ENCODE measurements at regions of chr3 and their contacts with region 1.

Region 1: GRCh38 chr3:124014366-124014942 is 22.5 kb upstream of the ROPN1 start:
- DNase-seq: no peak
- H3K4me3 Mint-ChIP-seq: no peak overlapping the region
- H3K27ac Mint-ChIP-seq: no peak overlapping the region
- H3K4me1 Mint-ChIP-seq: no peaks in the 10 kb centered on the region
- H3K27me3 Mint-ChIP-seq: peaks cover 22% of the 10 kb centered on the region

Region 2: DNA sequence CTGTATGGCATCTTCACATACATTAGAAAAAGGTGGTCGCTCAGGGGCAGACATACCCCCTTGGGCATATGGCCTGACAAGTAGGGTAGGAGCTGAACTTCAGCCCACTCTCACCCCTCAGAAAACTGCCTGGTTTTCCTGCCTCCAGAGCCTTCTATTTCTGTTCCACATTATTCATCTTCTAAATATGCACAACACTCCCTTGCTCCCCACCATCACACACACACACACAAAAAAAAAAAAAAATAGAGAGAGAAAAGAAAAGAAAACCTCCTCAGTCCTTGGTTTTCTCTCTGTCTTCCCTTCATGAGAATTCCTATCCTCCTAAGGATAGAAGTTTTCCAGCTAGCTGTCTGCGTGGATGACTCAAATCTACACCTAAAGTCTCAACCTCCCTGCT is 16.9 kb before region 1 on chr3:
- CTCF ChIA-PET with region 1: no interaction called
- POLR2A ChIA-PET with region 1: no interaction called
- intact Hi-C with region 1: no loop called
- DNase-seq: no peak
- H3K4me3 Mint-ChIP-seq: no peak overlapping the region
- H3K27ac Mint-ChIP-seq: no peak overlapping the region
- H3K4me1 Mint-ChIP-seq: no peaks in the 10 kb centered on the region
- H3K27me3 Mint-ChIP-seq: peaks cover 35% of the 10 kb centered on the region

Region 3: GRCh38 chr3:124078953-124079911 is 64.8 kb after region 1 on chr3:
- CTCF ChIA-PET with region 1: interaction called, 22 read pairs
- POLR2A ChIA-PET with region 1: no interaction called
- intact Hi-C with region 1: loop called (anchors 1 kb)
- DNase-seq: no peak
- H3K4me3 Mint-ChIP-seq: no peak overlapping the region
- H3K27ac Mint-ChIP-seq: no peak overlapping the region
- H3K4me1 Mint-ChIP-seq: no peaks in the 10 kb centered on the region
- H3K27me3 Mint-ChIP-seq: peaks cover 4% of the 10 kb centered on the region

Measured in activated CD4-positive, alpha-beta memory T cell treated with anti-CD3 and anti-CD28 coated beads for 36 hours (primary cell).